Dorsolateral prefrontal cortex (tissue), 120 donors: ENCODE measurements at regions of chrX and their contacts with region 1.

Region 1: DNA sequence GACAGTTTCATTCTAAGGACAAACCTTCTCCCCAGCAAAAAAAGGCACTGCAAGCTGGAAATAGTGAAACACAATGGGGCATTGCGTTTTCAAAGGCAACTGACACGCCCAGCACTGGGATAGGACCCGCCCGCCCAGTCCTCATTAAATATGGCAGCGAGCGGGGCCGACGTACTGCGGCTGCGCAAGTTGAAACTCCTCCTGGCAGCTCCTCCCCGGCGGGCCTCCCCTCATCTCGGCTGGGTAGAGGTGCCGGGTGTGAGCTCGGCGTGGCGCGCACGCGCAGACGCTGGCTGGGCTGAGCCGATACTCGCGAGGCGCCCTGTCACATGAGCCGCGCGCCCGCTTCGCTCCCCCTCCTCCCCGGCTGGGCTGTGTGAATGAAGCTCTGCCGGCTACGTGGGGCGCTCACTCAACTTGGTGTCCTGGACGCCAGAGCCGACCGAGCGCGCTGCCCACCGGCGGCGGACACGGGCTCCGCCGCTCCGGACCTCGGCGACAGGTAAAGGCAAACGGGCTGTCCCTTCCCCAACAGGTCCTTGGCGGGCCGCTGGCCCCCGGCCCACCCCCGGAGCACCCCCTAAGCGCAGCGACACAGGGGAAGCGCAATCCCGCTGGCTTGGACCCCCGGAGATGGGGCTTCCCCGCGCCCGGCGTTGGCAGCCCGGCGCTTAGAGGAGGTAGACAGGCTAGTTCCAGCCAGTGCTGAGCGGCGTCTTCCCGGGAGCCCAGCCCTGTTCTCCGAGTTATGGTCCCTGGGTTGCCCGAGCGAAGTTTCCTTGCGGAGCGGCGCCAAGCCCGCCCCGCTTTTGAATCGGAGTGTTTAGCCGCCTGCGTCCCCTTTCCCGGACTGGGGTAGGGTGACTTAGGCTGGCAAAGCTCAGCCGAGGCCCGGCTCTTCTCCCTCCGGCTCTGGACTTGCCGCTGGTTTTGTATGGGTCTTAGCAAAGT is at the start of gene CLCN5:
- DNase-seq: peak; percentile 85 to 93 (median 92)
- H3K4me3 ChIP-seq: peak within 1 kb of the TSS; percentile 44 to 76 (median 66)
- H3K27ac ChIP-seq: peak within 1 kb of the TSS in 44 of 59 donors; percentile 6 to 84 (median 54)
- H3K27me3 ChIP-seq: peaks cover 0 to 58% (median 10%) of the 10 kb centered on the region in 45 donors
- CTCF ChIP-seq: peak in 25 of 56 donors; percentile 7 to 52 (median 26)
- total RNA-seq, gene CLCN5: 2.8 to 9.2 (median 5.1) TPM

Region 2: GRCh38 chrX:49878834-49879659 is 43.5 kb before region 1 on chrX and contains the start of gene USP27X:
- intact Hi-C with region 1: loop called in 1 of 2 experiments (anchors 2 kb)
- DNase-seq: peak; percentile 55 to 81 (median 74)
- H3K4me3 ChIP-seq: peak within 1 kb of the TSS; percentile 33 to 74 (median 61)
- H3K27ac ChIP-seq: peak within 1 kb of the TSS; percentile 46 to 97 (median 90)
- H3K27me3 ChIP-seq: peaks cover 0 to 67% (median 11%) of the 10 kb centered on the region in 45 donors
- CTCF ChIP-seq: peak in 54 of 56 donors; percentile 7 to 68 (median 46)
- total RNA-seq, gene USP27X: 4.4 to 20.1 (median 12.2) TPM

Region 3: GRCh38 chrX:50204364-50204899 is 281.9 kb after region 1 on chrX and contains the start of gene CCNB3:
- intact Hi-C with region 1: loop called in 1 of 2 experiments (anchors 2 kb)
- DNase-seq: peak; percentile 43 to 75 (median 65)
- H3K4me3 ChIP-seq: peak within 1 kb of the TSS in 57 of 59 donors; percentile 2 to 61 (median 41)
- H3K27ac ChIP-seq: peak within 1 kb of the TSS in 48 of 59 donors; percentile 2 to 72 (median 55)
- H3K27me3 ChIP-seq: peaks cover 0 to 49% (median 9%) of the 10 kb centered on the region in 45 donors
- CTCF ChIP-seq: peak; percentile 50 to 81 (median 69)
- total RNA-seq, gene CCNB3: 0.12 to 5.8 (median 1.2) TPM in 118 of 120 experiments, not detected in the others

Region 4: GRCh38 chrX:50579955-50580354 is 657.4 kb after region 1 on chrX:
- intact Hi-C with region 1: loop called in 1 of 2 experiments (anchors 10 kb)
- DNase-seq: peak in 3 of 10 donors; percentile 7 to 48 (median 42)
- H3K4me3 ChIP-seq: no peak overlapping the region
- H3K27ac ChIP-seq: no peak overlapping the region
- H3K27me3 ChIP-seq: peaks cover 0 to 61% (median 7%) of the 10 kb centered on the region in 45 donors
- CTCF ChIP-seq: peak in 55 of 56 donors; percentile 21 to 74 (median 56)